Naive thymus-derived CD4-positive, alpha-beta T cell (primary cell): ENCODE measurements at regions of chr2 and their contacts with region 1.

Region 1: DNA sequence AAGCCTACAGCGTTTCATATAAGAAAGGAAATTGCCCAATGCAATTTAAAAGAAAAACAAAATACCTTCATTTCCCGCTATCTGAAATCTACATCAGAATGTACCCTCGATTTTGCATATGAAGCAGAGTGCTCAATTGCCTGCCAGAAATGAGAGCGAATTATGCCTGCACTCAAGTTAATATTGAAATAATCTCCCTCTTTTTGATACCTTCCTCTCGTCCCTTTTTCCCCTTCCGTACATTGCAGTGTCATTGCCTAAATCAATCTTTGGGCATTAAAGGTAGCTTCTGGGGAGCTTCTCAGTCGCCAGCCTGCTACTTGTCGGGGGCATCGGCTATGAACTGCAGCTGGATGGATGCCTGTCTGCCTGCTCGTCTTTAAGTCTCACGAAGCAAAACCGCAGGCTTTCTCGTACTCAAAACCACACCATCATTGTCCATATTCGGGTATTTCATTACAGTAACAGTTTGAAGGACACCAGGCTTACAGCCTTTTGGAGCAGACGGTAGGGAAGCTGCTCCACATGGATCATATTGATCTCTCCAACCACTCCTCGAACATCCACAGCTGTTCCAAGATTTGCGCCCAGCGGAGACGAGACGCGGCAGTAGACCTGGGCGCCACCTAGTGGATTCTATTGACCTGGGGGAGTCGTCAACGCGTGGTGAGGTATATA is 64.0 kb upstream of the HNRNPA3 start:
- DNase-seq: peak; percentile 60 to 77 (median 71)
- ATAC-seq: peak; percentile 96
- H3K4me3 ChIP-seq: peak overlapping the region; percentile 72
- H3K4me3 Mint-ChIP-seq: peak overlapping the region; percentile 84 to 94 (median 89)
- H3K27ac ChIP-seq: no peak overlapping the region
- H3K27ac Mint-ChIP-seq: peak overlapping the region in 8 of 9 donors; percentile 3 to 33 (median 11)
- H3K4me1 ChIP-seq: peaks cover 6 to 14% of the 10 kb centered on the region in 2 donors
- H3K4me1 Mint-ChIP-seq: peaks cover 8 to 16% (median 11%) of the 10 kb centered on the region in 7 donors
- H3K27me3 ChIP-seq: peaks cover 0 to 3% of the 10 kb centered on the region in 2 donors
- H3K27me3 Mint-ChIP-seq: peaks cover 33 to 73% (median 52%) of the 10 kb centered on the region in 5 donors

Region 2: GRCh38 chr2:175366815-175367214 is 1781.8 kb before region 1 on chr2:
- CTCF ChIA-PET with region 1: no interaction called
- POLR2A ChIA-PET with region 1: no interaction called
- intact Hi-C with region 1: loop called in 1 of 2 experiments (anchors 2 kb)
- DNase-seq: peak in 3 of 9 donors; percentile 6 to 22 (median 14)
- ATAC-seq: peak; percentile 76
- H3K4me3 ChIP-seq: no peak overlapping the region
- H3K4me3 Mint-ChIP-seq: no peak overlapping the region
- H3K27ac ChIP-seq: no peak overlapping the region
- H3K27ac Mint-ChIP-seq: no peak overlapping the region
- H3K4me1 ChIP-seq: no peaks in the 10 kb centered on the region
- H3K4me1 Mint-ChIP-seq: no peaks in the 10 kb centered on the region
- H3K27me3 ChIP-seq: peaks cover 0 to 5% of the 10 kb centered on the region in 2 donors
- H3K27me3 Mint-ChIP-seq: peaks cover 13 to 32% (median 20%) of the 10 kb centered on the region in 5 donors

Region 3: GRCh38 chr2:176269319-176270099 is 879.1 kb before region 1 on chr2 and contains the start of gene MTX2:
- CTCF ChIA-PET with region 1: no interaction called
- POLR2A ChIA-PET with region 1: no interaction called
- intact Hi-C with region 1: loop called in 1 of 2 experiments (anchors 1 kb)
- DNase-seq: peak; percentile 48 to 80 (median 75)
- ATAC-seq: peak; percentile 92
- H3K4me3 ChIP-seq: peak within 1 kb of the TSS; percentile 97
- H3K4me3 Mint-ChIP-seq: peak within 1 kb of the TSS; percentile 95 to 99 (median 97)
- H3K27ac ChIP-seq: peak within 1 kb of the TSS; percentile 84
- H3K27ac Mint-ChIP-seq: peak within 1 kb of the TSS; percentile 70 to 97 (median 92)
- H3K4me1 ChIP-seq: peaks cover 7 to 8% of the 10 kb centered on the region in 2 donors
- H3K4me1 Mint-ChIP-seq: peaks cover 16 to 46% (median 39%) of the 10 kb centered on the region in 7 donors
- H3K27me3 ChIP-seq: no peaks in the 10 kb centered on the region
- H3K27me3 Mint-ChIP-seq: peaks cover 0 to 19% (median 9%) of the 10 kb centered on the region in 5 donors
- total RNA-seq, gene MTX2: 6.6 to 14.3 (median 9.3) TPM

Region 4: DNA sequence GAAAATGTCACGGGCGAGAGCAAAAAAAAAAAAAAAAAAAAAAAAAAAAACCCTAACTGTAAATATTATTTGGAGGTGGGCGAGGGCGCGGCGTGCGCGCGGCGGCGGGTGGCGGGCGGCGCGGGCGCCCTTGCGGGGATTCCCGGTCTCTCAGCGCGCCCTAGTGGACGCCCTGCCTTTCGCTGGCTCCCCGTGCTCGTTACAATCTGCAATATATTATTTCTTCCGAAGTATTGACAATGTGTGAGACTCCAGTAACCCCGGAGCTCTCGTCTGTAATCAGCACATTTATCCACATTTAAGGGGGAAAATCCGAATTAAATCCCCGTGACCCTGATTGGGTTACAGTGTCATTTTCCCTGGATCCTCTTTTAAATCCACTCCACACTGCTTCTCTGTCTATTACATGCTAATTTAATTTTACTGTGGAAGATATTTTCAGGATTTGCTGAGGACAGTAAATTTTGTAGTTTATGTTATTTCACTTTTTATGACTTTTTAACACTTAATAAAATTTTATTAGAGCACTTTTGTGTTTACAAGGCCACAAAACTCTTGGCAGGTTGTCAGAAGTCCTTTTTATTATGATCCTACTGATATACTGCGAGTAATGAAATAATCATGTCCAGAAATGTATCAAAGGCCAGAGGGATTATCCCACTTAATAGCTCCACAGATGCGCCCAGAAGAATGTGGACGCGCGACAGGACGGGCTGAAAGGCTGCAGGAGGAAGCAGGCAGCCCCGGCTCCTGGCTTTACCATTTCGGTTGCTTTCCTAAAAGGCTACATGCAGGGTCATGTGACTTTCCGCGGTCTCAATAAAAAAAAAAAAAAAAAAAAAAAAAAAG is 510.2 kb before region 1 on chr2:
- CTCF ChIA-PET with region 1: no interaction called
- POLR2A ChIA-PET with region 1: no interaction called
- intact Hi-C with region 1: loop called (anchors 5 kb)
- DNase-seq: peak in 8 of 9 donors; percentile 28 to 67 (median 50)
- ATAC-seq: peak; percentile 87
- H3K4me3 ChIP-seq: peak overlapping the region; percentile 45
- H3K4me3 Mint-ChIP-seq: peak overlapping the region in 9 of 10 donors; percentile 55 to 81 (median 70)
- H3K27ac ChIP-seq: no peak overlapping the region
- H3K27ac Mint-ChIP-seq: no peak overlapping the region
- H3K4me1 ChIP-seq: no peaks in the 10 kb centered on the region
- H3K4me1 Mint-ChIP-seq: peaks cover 0 to 10% (median 3%) of the 10 kb centered on the region in 7 donors
- H3K27me3 ChIP-seq: peaks cover 3 to 10% of the 10 kb centered on the region in 2 donors
- H3K27me3 Mint-ChIP-seq: peaks cover 53 to 78% (median 71%) of the 10 kb centered on the region in 5 donors

Region 5: DNA sequence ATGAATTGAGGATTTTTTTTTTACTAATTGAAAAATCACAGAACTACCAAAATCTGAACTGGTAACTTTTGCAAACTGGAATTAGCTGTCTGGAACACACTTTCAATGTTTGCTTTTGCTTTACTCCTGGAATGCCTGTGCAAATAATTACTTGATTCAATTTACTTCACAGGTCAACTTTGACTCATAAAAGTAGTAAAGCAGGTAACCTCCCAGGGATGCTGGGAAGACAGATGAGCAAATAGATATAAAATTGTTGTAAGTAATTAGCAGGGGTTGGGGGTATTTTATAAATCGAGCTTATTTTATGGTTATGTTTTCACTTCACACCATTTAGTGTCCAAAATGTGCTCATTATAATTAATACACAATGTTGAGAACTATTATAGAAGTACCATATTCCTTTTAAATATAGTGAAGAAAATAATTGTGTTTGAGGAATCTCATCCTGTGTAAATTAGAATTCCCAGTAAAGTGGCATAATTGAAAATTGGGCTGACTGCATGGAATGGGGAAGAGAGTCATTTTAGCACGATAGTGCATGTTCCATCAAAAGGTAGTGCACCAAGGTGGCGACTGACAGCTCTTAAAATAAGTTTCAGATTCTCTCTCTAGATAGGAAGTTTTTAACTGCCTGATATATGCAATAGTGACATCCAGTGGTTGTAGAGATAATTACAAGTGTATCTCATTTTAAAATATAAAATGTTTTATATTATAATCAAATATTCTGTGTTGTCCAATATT is 334.1 kb before region 1 on chr2:
- CTCF ChIA-PET with region 1: no interaction called
- POLR2A ChIA-PET with region 1: no interaction called
- intact Hi-C with region 1: loop called (anchors 1 kb)
- DNase-seq: peak in 5 of 9 donors; percentile 34 to 47 (median 44)
- ATAC-seq: peak; percentile 80
- H3K4me3 ChIP-seq: no peak overlapping the region
- H3K4me3 Mint-ChIP-seq: peak overlapping the region in 7 of 10 donors; percentile 7 to 62 (median 24)
- H3K27ac ChIP-seq: no peak overlapping the region
- H3K27ac Mint-ChIP-seq: no peak overlapping the region
- H3K4me1 ChIP-seq: peaks cover 3 to 7% of the 10 kb centered on the region in 2 donors
- H3K4me1 Mint-ChIP-seq: peaks cover 10 to 26% (median 19%) of the 10 kb centered on the region in 7 donors
- H3K27me3 ChIP-seq: no peaks in the 10 kb centered on the region
- H3K27me3 Mint-ChIP-seq: peaks cover 0 to 7% (median 0%) of the 10 kb centered on the region in 5 donors

Region 6: DNA sequence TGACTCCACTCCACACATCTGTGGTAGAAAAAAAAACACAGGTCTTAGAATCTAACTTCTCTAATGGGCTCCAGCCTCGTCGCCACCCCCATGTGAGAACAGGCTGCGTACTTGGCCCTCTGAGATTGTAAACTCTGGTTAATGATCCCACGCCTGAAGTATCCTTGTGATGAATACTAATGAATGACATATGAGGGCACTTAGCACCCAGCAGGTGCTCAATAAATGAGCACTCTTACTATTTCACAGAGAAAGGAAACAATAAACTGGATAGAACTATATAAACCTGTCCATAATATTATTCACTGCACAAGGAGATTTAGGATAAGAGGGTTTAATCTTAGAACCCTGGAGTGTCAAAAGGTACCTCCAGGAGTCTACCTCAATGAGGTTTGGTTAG is 246.2 kb before region 1 on chr2:
- CTCF ChIA-PET with region 1: no interaction called
- POLR2A ChIA-PET with region 1: no interaction called
- intact Hi-C with region 1: no loop called
- DNase-seq: no peak
- ATAC-seq: no peak
- H3K4me3 ChIP-seq: no peak overlapping the region
- H3K4me3 Mint-ChIP-seq: no peak overlapping the region
- H3K27ac ChIP-seq: no peak overlapping the region
- H3K27ac Mint-ChIP-seq: no peak overlapping the region
- H3K4me1 ChIP-seq: no peaks in the 10 kb centered on the region
- H3K4me1 Mint-ChIP-seq: no peaks in the 10 kb centered on the region
- H3K27me3 ChIP-seq: no peaks in the 10 kb centered on the region
- H3K27me3 Mint-ChIP-seq: peaks cover 0 to 28% (median 5%) of the 10 kb centered on the region in 5 donors

Region 7: GRCh38 chr2:177164584-177165052 is 16.0 kb after region 1 on chr2:
- CTCF ChIA-PET with region 1: interaction called, 34 read pairs
- POLR2A ChIA-PET with region 1: interaction called, 5 read pairs
- intact Hi-C with region 1: loop called in 1 of 2 experiments (anchors 1 kb)
- DNase-seq: peak; percentile 65 to 77 (median 71)
- ATAC-seq: peak; percentile 89
- H3K4me3 ChIP-seq: peak overlapping the region; percentile 25
- H3K4me3 Mint-ChIP-seq: no peak overlapping the region
- H3K27ac ChIP-seq: peak overlapping the region; percentile 66
- H3K27ac Mint-ChIP-seq: no peak overlapping the region
- H3K4me1 ChIP-seq: peaks cover 11 to 16% of the 10 kb centered on the region in 2 donors
- H3K4me1 Mint-ChIP-seq: peaks cover 0 to 33% (median 12%) of the 10 kb centered on the region in 7 donors
- H3K27me3 ChIP-seq: no peaks in the 10 kb centered on the region
- H3K27me3 Mint-ChIP-seq: peaks cover 0 to 7% (median 0%) of the 10 kb centered on the region in 5 donors

Region 8: GRCh38 chr2:177618255-177619253 is 469.9 kb after region 1 on chr2:
- CTCF ChIA-PET with region 1: interaction called, 3 read pairs
- POLR2A ChIA-PET with region 1: interaction called, 3 read pairs
- intact Hi-C with region 1: loop called in 1 of 2 experiments (anchors 5 kb)
- DNase-seq: peak; percentile 86 to 93 (median 91)
- ATAC-seq: peak; percentile 95
- H3K4me3 ChIP-seq: peak overlapping the region; percentile 86
- H3K4me3 Mint-ChIP-seq: peak overlapping the region; percentile 80 to 99 (median 96)
- H3K27ac ChIP-seq: peak overlapping the region; percentile 96
- H3K27ac Mint-ChIP-seq: peak overlapping the region; percentile 98 to 100 (median 99)
- H3K4me1 ChIP-seq: no peaks in the 10 kb centered on the region
- H3K4me1 Mint-ChIP-seq: peaks cover 0 to 15% (median 9%) of the 10 kb centered on the region in 7 donors
- H3K27me3 ChIP-seq: no peaks in the 10 kb centered on the region
- H3K27me3 Mint-ChIP-seq: peaks cover 0 to 35% (median 9%) of the 10 kb centered on the region in 5 donors